H1 (cell line): ENCODE measurements at regions of chr19 and their contacts with region 1.

Region 1: GRCh38 chr19:8208922-8209461 is at the start of gene CERS4:
- DNase-seq: peak; percentile 64 to 92
- H3K4me3 ChIP-seq: peak within 1 kb of the TSS; percentile 77 to 93 (median 88)
- H3K27ac ChIP-seq: peak within 1 kb of the TSS; percentile 73
- H3K4me1 ChIP-seq: peaks cover 6 to 30% (median 20%) of the 10 kb centered on the region in 4 experiments
- H3K27me3 ChIP-seq: no peaks in the 10 kb centered on the region; a peak in 1 of 7 replicates
- CTCF ChIP-seq: no peak
- EP300 ChIP-seq: no peak
- POLR2A ChIP-seq: peak in 1 of 2 experiments; percentile 52; a peak in 2 of 3 replicates
- RAD21 ChIP-seq: no peak
- total RNA-seq, gene CERS4: 88.2 and 96.5 TPM in 2 replicates

Region 2: DNA sequence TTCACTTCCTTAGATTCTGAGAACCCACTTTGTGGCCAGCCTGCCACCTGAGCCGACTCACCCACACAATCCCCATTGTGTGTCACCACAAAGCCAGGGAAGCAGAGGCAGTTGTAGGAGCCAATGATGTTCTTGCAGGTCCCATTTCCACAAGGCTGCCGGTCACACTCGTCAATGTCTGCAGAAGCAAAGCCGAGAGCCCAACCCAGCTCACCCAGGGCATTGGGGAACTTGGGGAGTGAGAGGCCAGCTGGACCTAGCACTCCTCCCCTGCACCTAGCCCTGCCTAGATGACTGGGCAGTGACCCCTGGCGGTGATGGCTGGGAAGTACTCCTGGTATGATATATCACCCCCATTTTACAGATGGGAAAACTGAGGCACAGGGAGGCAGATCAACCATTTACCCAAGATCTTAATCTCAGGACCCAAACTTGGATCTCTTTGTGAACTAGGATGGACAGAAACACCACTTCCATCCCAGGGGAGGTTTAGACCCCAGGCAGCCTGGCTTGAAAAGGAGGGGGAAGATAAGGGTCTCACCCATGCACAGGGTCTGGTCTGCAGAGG is 113.0 kb before region 1 on chr19:
- CTCF ChIA-PET with region 1: no interaction called
- POLR2A ChIA-PET with region 1: no interaction called
- DNase-seq: no peak
- H3K4me3 ChIP-seq: no peak overlapping the region
- H3K27ac ChIP-seq: no peak overlapping the region
- H3K4me1 ChIP-seq: no peaks in the 10 kb centered on the region
- H3K27me3 ChIP-seq: no peaks in the 10 kb centered on the region
- CTCF ChIP-seq: peak; percentile 20 to 34 (median 33)
- EP300 ChIP-seq: no peak
- POLR2A ChIP-seq: no peak
- RAD21 ChIP-seq: peak; percentile 35 to 42; a peak in 3 of 4 replicates

Region 3: GRCh38 chr19:8148410-8149231 is 60.4 kb before region 1 on chr19:
- CTCF ChIA-PET with region 1: interaction called, 3 read pairs
- POLR2A ChIA-PET with region 1: interaction called, 13 read pairs
- DNase-seq: peak; percentile 70 to 87
- H3K4me3 ChIP-seq: peak overlapping the region; percentile 58 to 78 (median 62)
- H3K27ac ChIP-seq: peak overlapping the region; percentile 76; the same call in 1 of the 2 replicates
- H3K4me1 ChIP-seq: peaks cover 0 to 24% (median 13%) of the 10 kb centered on the region in 4 experiments; a peak in 6 of 7 replicates
- H3K27me3 ChIP-seq: no peaks in the 10 kb centered on the region
- CTCF ChIP-seq: no peak
- EP300 ChIP-seq: no peak
- POLR2A ChIP-seq: peak in 1 of 2 experiments; percentile 83; a peak in 2 of 3 replicates
- RAD21 ChIP-seq: no peak

Region 4: GRCh38 chr19:8194528-8195267 is 14.3 kb before region 1 on chr19:
- CTCF ChIA-PET with region 1: interaction called, 4 read pairs
- POLR2A ChIA-PET with region 1: interaction called, 13 read pairs
- DNase-seq: no peak
- H3K4me3 ChIP-seq: no peak overlapping the region
- H3K27ac ChIP-seq: no peak overlapping the region
- H3K4me1 ChIP-seq: peaks cover 0 to 6% (median 3%) of the 10 kb centered on the region in 4 experiments; a peak in 5 of 7 replicates
- H3K27me3 ChIP-seq: no peaks in the 10 kb centered on the region
- CTCF ChIP-seq: no peak
- EP300 ChIP-seq: no peak
- POLR2A ChIP-seq: no peak
- RAD21 ChIP-seq: no peak

Region 5: GRCh38 chr19:8220481-8220880 is 11.5 kb after region 1 on chr19:
- CTCF ChIA-PET with region 1: interaction called, 5 read pairs
- POLR2A ChIA-PET with region 1: interaction called, 11 read pairs
- DNase-seq: no peak
- H3K4me3 ChIP-seq: no peak overlapping the region
- H3K27ac ChIP-seq: no peak overlapping the region
- H3K4me1 ChIP-seq: no peaks in the 10 kb centered on the region
- H3K27me3 ChIP-seq: no peaks in the 10 kb centered on the region
- CTCF ChIP-seq: no peak
- EP300 ChIP-seq: no peak
- POLR2A ChIP-seq: no peak
- RAD21 ChIP-seq: no peak

Region 6: GRCh38 chr19:8240274-8241229 is 31.6 kb after region 1 on chr19:
- CTCF ChIA-PET with region 1: interaction called, 6 read pairs
- POLR2A ChIA-PET with region 1: interaction called, 28 read pairs
- DNase-seq: peak; percentile 51 to 62
- H3K4me3 ChIP-seq: peak overlapping the region in 1 of 4 experiments; percentile 5; a peak in 2 of 8 replicates
- H3K27ac ChIP-seq: 0 out of 2 replicates have a peak overlapping the region, but pooled peaks have one; percentile 43
- H3K4me1 ChIP-seq: peaks cover 0 to 17% (median 6%) of the 10 kb centered on the region in 4 experiments; a peak in 4 of 7 replicates
- H3K27me3 ChIP-seq: no peaks in the 10 kb centered on the region
- CTCF ChIP-seq: no peak
- EP300 ChIP-seq: no peak
- POLR2A ChIP-seq: 0 out of 3 replicates have a peak, but pooled peaks of 1 of the 2 experiments have one; percentile 15
- RAD21 ChIP-seq: no peak